GM12878 (cell line): ENCODE measurements at regions of chr3 and their contacts with region 1.

Region 1: DNA sequence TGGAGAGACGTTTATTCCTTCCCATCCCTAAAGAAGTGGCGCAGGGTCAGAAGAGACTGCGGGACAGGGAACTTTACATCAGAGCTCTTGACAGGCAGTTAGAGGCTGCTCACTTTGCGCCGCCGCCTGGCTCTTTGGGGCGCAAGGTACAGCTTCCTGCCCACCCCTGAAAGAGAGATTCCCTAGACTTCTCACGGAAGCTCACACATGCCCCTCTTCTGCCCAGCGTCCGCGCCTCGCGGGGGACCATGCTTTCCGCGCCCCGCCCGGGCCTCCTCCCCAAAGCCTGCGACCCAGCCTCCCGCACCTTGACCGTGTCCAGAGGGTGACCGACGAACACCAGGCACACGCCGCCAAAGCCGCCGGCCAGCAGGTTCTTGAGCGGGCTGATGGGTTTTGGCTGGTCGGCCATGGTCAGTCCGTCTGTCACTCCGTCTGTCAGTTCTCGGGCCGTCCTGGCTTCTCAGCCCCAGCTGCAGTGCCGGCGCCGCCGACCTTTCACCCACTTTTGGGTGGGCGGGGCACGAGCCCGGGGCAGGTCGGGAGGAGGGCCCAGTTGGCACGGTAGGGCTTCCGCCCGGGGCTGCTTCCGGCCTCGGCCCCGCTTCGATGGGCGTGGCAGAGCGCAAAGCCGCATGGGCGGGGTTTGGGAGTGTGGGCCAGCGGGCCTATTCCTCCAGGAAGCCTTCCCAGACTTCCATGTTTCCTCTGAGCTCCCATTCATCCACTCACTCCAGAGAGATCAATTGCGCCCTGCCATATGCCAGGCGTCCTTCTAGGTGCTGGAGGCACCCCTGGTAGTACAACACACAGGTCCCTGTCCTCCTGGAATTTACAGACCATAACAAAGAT is at the start of gene SLC25A20:
- DNase-seq: peak; percentile 63
- ATAC-seq: peak; percentile 98
- H3K4me3 ChIP-seq: peak within 1 kb of the TSS; percentile 75
- H3K27ac ChIP-seq: peak within 1 kb of the TSS; percentile 66
- H3K4me1 ChIP-seq: peaks cover 18% of the 10 kb centered on the region
- H3K27me3 ChIP-seq: no peaks in the 10 kb centered on the region
- CTCF ChIP-seq: peak in 2 of 3 experiments; percentile 11 to 26; a peak in 1 of 6 replicates
- EP300 ChIP-seq: no peak
- POLR2A ChIP-seq: peak; percentile 75
- RAD21 ChIP-seq: 0 out of 2 replicates have a peak, but pooled peaks have one; percentile 11
- polyA plus RNA-seq, gene SLC25A20: 14.4 to 18.7 TPM

Region 2: GRCh38 chr3:48672522-48672921 is 226.1 kb before region 1 on chr3:
- CTCF ChIA-PET with region 1: no interaction called
- POLR2A ChIA-PET with region 1: no interaction called
- RAD21 ChIA-PET with region 1: no interaction called
- SMC1A ChIA-PET with region 1: no interaction called
- in situ Hi-C with region 1: no loop called
- intact Hi-C with region 1: no loop called
- DNase-seq: no peak
- ATAC-seq: no peak
- H3K4me3 ChIP-seq: no peak overlapping the region
- H3K27ac ChIP-seq: no peak overlapping the region
- H3K4me1 ChIP-seq: no peaks in the 10 kb centered on the region
- H3K27me3 ChIP-seq: no peaks in the 10 kb centered on the region
- CTCF ChIP-seq: no peak
- EP300 ChIP-seq: no peak
- POLR2A ChIP-seq: no peak
- RAD21 ChIP-seq: no peak

Region 3: GRCh38 chr3:48739955-48740823 is 158.4 kb before region 1 on chr3:
- CTCF ChIA-PET with region 1: interaction called, 12 read pairs
- POLR2A ChIA-PET with region 1: no interaction called
- RAD21 ChIA-PET with region 1: interaction called, 6 read pairs
- SMC1A ChIA-PET with region 1: interaction called, 3 read pairs
- in situ Hi-C with region 1: no loop called
- intact Hi-C with region 1: no loop called
- DNase-seq: no peak
- ATAC-seq: peak; percentile 99
- H3K4me3 ChIP-seq: no peak overlapping the region
- H3K27ac ChIP-seq: no peak overlapping the region
- H3K4me1 ChIP-seq: peaks cover 9% of the 10 kb centered on the region
- H3K27me3 ChIP-seq: no peaks in the 10 kb centered on the region
- CTCF ChIP-seq: peak; percentile 73 to 91 (median 77)
- EP300 ChIP-seq: no peak
- POLR2A ChIP-seq: no peak
- RAD21 ChIP-seq: peak; percentile 31

Region 4: DNA sequence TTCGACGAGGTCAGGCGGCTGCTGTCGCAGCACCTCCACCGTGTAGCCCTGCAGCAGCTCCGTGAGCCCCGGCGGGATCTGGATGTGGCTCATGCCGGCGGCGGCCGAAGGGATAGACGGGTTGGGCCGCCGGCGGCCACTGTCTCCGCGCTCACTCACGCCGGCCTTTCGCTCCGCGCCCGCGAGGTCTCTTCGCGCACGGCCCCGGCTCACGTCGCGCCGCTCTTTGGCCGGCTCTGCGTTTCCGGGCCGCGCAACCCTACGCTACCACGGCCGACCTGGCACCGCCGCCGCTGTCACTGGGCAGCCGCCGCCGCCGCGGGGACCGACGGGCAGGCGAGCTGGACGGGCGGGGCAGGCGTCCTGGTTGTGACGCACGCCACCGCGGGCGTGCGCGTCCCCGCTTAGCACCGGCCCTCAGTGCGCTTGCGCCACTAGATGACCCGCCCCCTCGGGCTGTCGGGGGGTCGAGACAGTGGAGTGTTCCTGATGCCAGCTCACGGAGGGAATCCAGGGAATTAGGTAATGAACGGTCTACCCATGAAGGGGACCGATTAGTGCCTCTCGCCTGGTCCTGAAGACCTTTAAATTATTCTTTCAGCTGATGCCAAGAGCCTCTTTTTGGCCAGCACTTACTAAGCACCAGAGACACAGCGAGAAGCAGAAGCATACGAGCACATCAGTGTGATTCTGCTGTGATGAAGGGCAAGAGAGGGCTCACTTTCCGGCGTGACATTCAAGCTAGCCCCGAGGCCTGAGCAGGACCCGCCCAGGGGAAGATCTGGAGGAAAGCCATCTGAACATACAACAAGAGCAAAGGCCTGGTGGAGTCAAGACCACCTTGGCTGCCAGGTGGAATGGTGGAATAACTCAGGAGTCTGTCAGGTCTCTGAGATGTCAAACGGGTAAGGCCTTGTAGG is 50.8 kb before region 1 on chr3 and contains the start of gene PRKAR2A:
- CTCF ChIA-PET with region 1: interaction called, 3 read pairs
- POLR2A ChIA-PET with region 1: interaction called, 3 read pairs
- RAD21 ChIA-PET with region 1: interaction called, 4 read pairs
- SMC1A ChIA-PET with region 1: interaction called, 3 read pairs
- in situ Hi-C with region 1: no loop called
- intact Hi-C with region 1: loop called (anchors 5 kb)
- DNase-seq: peak; percentile 62
- ATAC-seq: peak; percentile 97
- H3K4me3 ChIP-seq: peak within 1 kb of the TSS; percentile 81
- H3K27ac ChIP-seq: peak within 1 kb of the TSS; percentile 64
- H3K4me1 ChIP-seq: peaks cover 8% of the 10 kb centered on the region
- H3K27me3 ChIP-seq: no peaks in the 10 kb centered on the region
- CTCF ChIP-seq: no peak
- EP300 ChIP-seq: no peak
- POLR2A ChIP-seq: peak; percentile 81
- RAD21 ChIP-seq: no peak
- polyA plus RNA-seq, gene PRKAR2A: 9.8 to 11.1 TPM

Region 5: DNA sequence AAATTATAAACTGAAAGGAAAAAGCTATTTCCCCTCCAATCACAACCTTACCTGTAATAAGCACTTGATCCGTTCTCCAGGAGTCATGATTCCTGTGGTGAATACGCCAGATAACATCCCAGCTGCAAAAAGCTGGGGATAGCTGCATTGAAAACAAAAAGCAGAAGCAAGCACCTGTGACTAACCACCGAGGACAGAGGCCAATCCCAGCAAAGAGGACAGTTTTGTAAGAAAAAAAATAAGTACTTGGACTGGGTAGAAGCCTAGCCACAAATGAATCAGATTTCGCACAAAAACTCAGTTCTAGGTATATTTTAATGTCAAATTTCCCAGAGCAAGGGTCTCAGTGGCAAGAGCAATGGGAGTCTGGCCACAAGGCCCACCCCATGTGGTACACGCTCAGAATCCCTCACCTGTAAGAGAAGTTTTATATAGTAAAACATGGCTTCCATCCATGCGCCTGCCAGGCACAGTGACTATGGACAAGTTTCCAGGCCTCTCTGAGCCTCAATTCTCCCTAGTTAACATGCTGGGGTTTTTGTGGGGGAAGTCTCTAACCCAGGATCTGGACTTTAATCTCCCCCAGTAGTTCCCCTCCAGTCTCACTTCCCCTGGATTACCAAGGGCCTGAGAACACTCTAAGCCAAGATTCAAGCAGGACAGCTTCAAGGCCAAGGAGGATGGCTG is 19.2 kb before region 1 on chr3:
- CTCF ChIA-PET with region 1: interaction called, 8 read pairs
- POLR2A ChIA-PET with region 1: interaction called, 5 read pairs
- RAD21 ChIA-PET with region 1: interaction called, 5 read pairs
- SMC1A ChIA-PET with region 1: interaction called, 10 read pairs
- in situ Hi-C with region 1: no loop called
- intact Hi-C with region 1: no loop called
- DNase-seq: no peak
- ATAC-seq: peak; percentile 91
- H3K4me3 ChIP-seq: no peak overlapping the region
- H3K27ac ChIP-seq: peak overlapping the region; percentile 23; the same call in 1 of the 2 replicates
- H3K4me1 ChIP-seq: peaks cover 14% of the 10 kb centered on the region
- H3K27me3 ChIP-seq: no peaks in the 10 kb centered on the region
- CTCF ChIP-seq: no peak
- EP300 ChIP-seq: no peak; a peak in 1 of 4 replicates
- POLR2A ChIP-seq: no peak
- RAD21 ChIP-seq: no peak

Region 6: GRCh38 chr3:48918388-48919214 is 20.0 kb after region 1 on chr3 and contains the start of gene ARIH2:
- CTCF ChIA-PET with region 1: interaction called, 12 read pairs
- POLR2A ChIA-PET with region 1: interaction called, 20 read pairs
- RAD21 ChIA-PET with region 1: interaction called, 14 read pairs
- SMC1A ChIA-PET with region 1: interaction called, 14 read pairs
- in situ Hi-C with region 1: no loop called
- intact Hi-C with region 1: loop called (anchors 2 kb)
- DNase-seq: peak; percentile 73
- ATAC-seq: peak; percentile 86
- H3K4me3 ChIP-seq: peak within 1 kb of the TSS; percentile 76
- H3K27ac ChIP-seq: peak within 1 kb of the TSS; percentile 94
- H3K4me1 ChIP-seq: peaks cover 5% of the 10 kb centered on the region
- H3K27me3 ChIP-seq: no peaks in the 10 kb centered on the region
- CTCF ChIP-seq: peak; percentile 7 to 49 (median 11); a peak in 3 of 6 replicates
- EP300 ChIP-seq: peak; percentile 71 to 76
- POLR2A ChIP-seq: peak; percentile 83
- RAD21 ChIP-seq: peak; percentile 51
- polyA plus RNA-seq, gene ARIH2: 18.7 to 22.2 TPM

Region 7: DNA sequence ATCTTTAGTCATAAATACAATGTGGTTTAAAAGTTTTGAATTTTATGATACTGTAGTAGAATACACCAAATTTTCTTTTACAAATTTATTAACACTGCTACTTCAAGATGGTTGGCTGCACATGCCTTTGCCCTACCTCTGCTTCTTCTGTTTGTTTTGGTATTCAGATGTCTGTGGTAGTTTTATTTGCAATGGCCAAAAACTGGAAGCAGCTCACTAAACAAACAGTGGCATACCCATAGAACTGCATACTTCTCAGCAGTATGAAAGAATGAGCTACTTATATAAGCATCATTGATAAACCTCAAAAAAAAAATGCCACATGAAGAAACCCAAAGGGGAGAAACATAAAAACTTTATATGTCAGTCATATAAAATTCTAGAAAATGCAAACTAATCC is 39.5 kb after region 1 on chr3:
- CTCF ChIA-PET with region 1: no interaction called
- POLR2A ChIA-PET with region 1: no interaction called
- RAD21 ChIA-PET with region 1: no interaction called
- SMC1A ChIA-PET with region 1: no interaction called
- in situ Hi-C with region 1: no loop called
- intact Hi-C with region 1: no loop called
- DNase-seq: no peak
- ATAC-seq: no peak
- H3K4me3 ChIP-seq: no peak overlapping the region
- H3K27ac ChIP-seq: no peak overlapping the region
- H3K4me1 ChIP-seq: no peaks in the 10 kb centered on the region
- H3K27me3 ChIP-seq: no peaks in the 10 kb centered on the region
- CTCF ChIP-seq: no peak
- EP300 ChIP-seq: no peak
- POLR2A ChIP-seq: no peak
- RAD21 ChIP-seq: no peak